ENCODE measurements at regions of chr1 and their contacts with region 1.

Region 1: DNA sequence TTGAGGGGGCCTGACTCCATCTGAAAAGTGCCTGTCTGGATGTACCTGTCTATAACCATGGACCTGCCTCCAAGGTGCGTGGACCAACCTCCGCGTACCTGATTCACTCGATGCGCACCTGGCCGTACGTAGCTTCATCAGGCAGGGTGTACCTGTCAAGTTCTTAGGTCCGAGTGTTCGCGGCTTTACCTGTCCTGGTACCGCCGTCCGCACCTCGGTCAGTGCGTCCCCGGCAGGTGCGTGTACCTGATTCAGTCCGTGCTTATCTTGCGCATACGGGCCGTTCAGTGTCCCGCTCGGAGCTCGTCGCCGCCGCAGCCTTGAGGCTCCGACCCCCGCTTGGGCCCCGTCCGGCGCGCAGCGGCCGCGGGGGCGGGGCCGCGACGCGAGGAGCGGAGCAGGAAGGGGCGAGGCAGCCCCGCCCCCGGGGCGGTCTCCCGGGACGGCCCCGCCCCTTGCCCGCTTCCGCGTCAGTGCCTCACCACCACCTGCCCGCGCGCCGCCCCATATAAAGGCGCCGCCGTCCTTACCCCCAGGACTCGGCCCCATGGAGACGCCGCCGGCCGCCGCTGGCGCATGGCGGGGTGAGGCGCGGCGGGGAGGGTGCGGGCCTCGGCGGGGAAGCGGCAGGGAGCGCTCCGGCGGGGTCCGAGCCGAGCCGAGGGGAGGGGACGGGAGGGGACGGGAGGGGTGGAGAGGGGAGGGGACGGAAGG is at the start of gene ZC3H12A:
- DNase-seq: peak; percentile 94 to 97
- ATAC-seq: peak; percentile 89
- H3K4me3 ChIP-seq: peak within 1 kb of the TSS; percentile 33 to 61
- H3K27ac ChIP-seq: peak within 1 kb of the TSS; percentile 76 to 93
- H3K4me1 ChIP-seq: no peaks in the 10 kb centered on the region
- H3K27me3 ChIP-seq: no peaks in the 10 kb centered on the region
- total RNA-seq, gene ZC3H12A: 9.0 to 26.5 TPM

Region 2: DNA sequence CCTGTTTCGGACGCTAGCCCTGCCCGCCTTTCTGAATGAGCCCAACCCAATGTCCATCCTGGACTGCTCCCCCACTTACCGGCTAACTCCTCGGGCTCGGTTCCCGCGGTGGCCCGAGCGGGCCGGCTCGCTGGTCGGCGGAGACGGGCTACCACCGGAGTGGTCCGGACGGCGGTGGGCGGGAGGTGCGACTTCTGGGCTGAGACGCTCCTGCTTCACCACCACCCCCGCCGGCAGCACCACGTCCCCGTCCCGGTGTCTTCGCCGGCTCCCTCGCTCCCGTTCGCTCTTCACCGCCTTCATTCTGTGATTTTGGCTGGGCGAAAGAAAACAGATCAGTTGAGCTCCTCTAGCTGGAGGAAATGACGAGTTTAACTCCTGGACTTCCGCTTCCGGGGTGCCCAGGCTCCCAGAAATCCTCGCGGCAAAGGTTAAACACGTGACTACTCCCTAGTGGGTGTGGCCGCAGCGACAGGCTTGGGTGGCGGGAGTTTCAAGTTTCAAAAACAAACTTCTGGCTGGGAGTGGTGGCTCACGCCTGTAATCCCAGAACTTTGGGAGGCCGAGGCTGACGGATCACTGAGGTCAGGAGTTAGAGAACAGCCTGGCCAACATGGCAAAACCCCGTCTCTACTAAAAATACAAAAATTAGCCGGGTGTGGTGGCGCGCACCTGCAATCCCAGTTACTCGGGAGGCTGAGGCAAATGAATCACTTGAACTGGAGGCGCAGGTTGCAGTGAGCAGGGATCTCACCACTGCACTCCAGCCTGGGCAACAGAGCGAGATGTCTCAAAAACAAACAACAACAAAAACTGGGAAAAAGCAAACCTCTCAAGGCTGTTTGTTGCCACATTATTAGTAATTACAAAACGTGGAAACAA is 80.0 kb after region 1 on chr1 and contains the start of gene SNIP1:
- intact Hi-C with region 1: loop called in 1 of 2 experiments (anchors 10 kb)
- DNase-seq: peak; percentile 94 to 95
- ATAC-seq: peak; percentile 95
- H3K4me3 ChIP-seq: peak within 1 kb of the TSS; percentile 24 to 98
- H3K27ac ChIP-seq: peak within 1 kb of the TSS in 1 of 2 donors; percentile 45
- H3K4me1 ChIP-seq: peaks cover 0 to 3% of the 10 kb centered on the region in 2 donors
- H3K27me3 ChIP-seq: no peaks in the 10 kb centered on the region
- total RNA-seq, gene SNIP1: 16.0 to 20.3 TPM

Region 3: GRCh38 chr1:37995751-37996345 is 521.6 kb after region 1 on chr1:
- intact Hi-C with region 1: loop called in 1 of 2 experiments (anchors 10 kb)
- DNase-seq: peak; percentile 91 to 96
- ATAC-seq: peak; percentile 72
- H3K4me3 ChIP-seq: peak overlapping the region; percentile 14 to 66
- H3K27ac ChIP-seq: peak overlapping the region; percentile 56 to 77
- H3K4me1 ChIP-seq: peaks cover 0 to 6% of the 10 kb centered on the region in 2 donors
- H3K27me3 ChIP-seq: no peaks in the 10 kb centered on the region